ENCODE measurements at regions of chr7 and their contacts with region 1.

Region 1: DNA sequence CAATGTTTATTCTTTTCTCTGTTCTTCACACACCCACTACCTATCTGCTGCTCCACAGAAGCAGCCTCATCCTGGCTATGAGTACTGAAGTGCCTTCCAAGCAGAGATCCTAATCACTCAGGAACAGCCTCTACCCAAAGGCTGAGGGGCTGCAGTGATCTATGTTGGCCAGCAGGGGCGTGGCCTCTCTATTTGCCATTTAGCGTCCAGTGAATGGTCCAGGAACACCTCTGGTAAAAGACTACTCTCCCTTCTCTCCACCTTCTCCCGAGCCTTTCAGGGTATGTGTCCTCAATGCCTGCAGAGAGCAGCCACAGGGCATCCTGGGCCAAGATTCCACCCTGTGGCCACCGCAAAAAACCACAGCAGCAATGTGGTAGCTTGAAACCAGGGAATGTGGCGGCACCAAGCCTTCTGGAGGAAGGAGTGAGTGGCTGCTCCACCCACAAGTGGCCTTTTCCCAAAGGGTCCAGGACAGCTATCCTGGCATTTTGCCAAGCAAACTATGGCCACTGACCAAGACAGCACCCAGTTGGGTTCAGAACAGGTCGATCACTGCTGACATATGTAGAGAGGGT is 70.9 kb downstream of the SYPL1 start:
- DNase-seq: peak; percentile 25 to 50 (median 40)
- ATAC-seq: peak; percentile 32
- H3K4me3 ChIP-seq: no peak overlapping the region
- H3K27ac ChIP-seq: no peak overlapping the region
- H3K4me1 ChIP-seq: peaks cover 8% of the 10 kb centered on the region
- H3K27me3 ChIP-seq: no peaks in the 10 kb centered on the region
- CTCF ChIP-seq: peak; percentile 36 to 67 (median 57)
- POLR2A ChIP-seq: no peak

Region 2: DNA sequence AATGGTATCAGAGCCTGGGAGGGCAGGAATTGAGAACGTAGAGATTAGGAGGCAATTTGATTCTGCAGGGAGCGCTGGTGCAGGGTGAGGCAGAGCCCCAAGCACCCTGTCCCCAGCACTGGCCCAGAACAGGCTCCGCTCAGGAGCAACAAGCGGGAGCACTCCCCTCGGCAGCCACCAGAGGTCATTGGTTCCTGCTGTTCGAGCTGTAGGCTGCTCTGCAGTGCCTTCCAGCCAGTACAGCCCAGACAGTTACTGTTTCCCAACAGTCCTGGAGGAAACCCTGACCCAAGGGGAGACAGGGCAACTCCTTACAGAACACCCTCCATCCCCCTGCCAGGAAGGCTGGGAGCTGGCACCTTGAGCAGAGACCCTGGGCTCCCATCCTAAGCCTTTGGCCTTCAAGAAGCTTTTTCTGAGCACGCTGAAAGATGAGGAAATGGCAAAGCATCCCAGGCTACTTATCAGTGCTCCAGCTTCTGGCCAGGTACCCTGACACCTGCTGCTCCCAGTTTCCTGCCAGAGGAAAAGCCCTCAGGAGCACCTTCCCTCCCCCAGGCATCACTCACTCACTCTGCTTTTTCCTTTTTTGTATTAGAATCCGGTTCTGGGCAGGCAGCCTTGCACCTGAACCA is 388.8 kb before region 1 on chr7:
- intact Hi-C with region 1: loop called (anchors 10 kb)
- DNase-seq: peak; percentile 83 to 88 (median 84)
- ATAC-seq: peak; percentile 79
- H3K4me3 ChIP-seq: no peak overlapping the region
- H3K27ac ChIP-seq: no peak overlapping the region
- H3K4me1 ChIP-seq: peaks cover 48% of the 10 kb centered on the region
- H3K27me3 ChIP-seq: no peaks in the 10 kb centered on the region
- CTCF ChIP-seq: peak; percentile 82 to 89 (median 85)
- POLR2A ChIP-seq: no peak

Region 3: GRCh38 chr7:105759670-105760550 is 281.3 kb before region 1 on chr7:
- intact Hi-C with region 1: loop called (anchors 5 kb)
- DNase-seq: peak; percentile 20 to 66 (median 42)
- ATAC-seq: peak; percentile 45
- H3K4me3 ChIP-seq: no peak overlapping the region
- H3K27ac ChIP-seq: no peak overlapping the region
- H3K4me1 ChIP-seq: no peaks in the 10 kb centered on the region
- H3K27me3 ChIP-seq: no peaks in the 10 kb centered on the region
- CTCF ChIP-seq: peak in 6 of 7 experiments; percentile 32 to 65 (median 50)
- POLR2A ChIP-seq: no peak

Region 4: GRCh38 chr7:106205621-106206222 is 164.5 kb after region 1 on chr7:
- intact Hi-C with region 1: no loop called
- DNase-seq: no peak
- ATAC-seq: no peak
- H3K4me3 ChIP-seq: no peak overlapping the region
- H3K27ac ChIP-seq: no peak overlapping the region
- H3K4me1 ChIP-seq: peaks cover 6% of the 10 kb centered on the region
- H3K27me3 ChIP-seq: no peaks in the 10 kb centered on the region
- CTCF ChIP-seq: no peak
- POLR2A ChIP-seq: no peak

Measured in body of pancreas (tissue), 4 donors.